ENCODE measurements at regions of chr2 and their contacts with region 1.

Region 1: DNA sequence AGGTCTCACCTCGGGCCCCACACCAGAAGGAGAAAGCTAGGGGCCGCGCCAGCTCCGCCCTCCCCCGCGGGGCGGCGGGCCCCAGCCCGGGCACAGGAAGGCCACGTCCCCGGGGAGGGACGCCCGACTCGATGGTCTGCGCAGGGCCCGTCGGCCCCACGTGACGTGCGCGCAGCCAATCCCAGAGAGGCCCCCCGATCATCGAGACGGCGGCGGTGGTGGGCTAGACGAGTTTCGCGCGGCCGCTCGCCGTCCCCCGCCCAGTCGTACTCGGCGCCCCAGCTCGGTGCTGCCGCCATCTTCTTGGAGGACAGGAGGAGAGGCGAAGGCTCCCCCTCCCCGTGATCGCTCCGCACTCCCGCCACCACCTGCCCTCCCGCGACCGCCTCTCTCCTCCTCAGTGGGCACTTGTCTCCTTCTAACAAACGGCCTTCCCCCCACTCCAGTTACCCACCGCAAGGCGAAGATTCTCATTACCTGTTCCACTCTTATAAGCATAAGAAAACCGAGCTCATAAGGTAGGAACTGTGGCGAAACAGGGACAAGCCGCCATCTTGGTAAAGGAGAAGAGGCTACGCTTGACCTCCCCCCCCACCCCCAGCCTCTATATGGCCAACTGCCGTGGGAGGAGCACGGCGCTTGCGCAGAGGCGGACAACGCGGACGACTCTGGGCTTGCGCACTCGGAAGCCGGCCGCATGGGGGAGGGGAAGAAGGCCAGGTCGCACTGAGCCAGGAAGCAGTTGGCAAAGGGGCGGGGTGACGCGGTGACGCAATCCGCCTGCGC is at the start of gene HDLBP:
- DNase-seq: peak; percentile 100
- ATAC-seq: peak; percentile 83
- H3K4me3 Mint-ChIP-seq: peak within 1 kb of the TSS; percentile 99
- H3K27ac Mint-ChIP-seq: peak within 1 kb of the TSS; percentile 100
- H3K4me1 Mint-ChIP-seq: peaks cover 66% of the 10 kb centered on the region
- H3K27me3 Mint-ChIP-seq: no peaks in the 10 kb centered on the region
- CTCF ChIP-seq: no peak
- total RNA-seq, gene HDLBP: 259 to 266 TPM

Region 2: DNA sequence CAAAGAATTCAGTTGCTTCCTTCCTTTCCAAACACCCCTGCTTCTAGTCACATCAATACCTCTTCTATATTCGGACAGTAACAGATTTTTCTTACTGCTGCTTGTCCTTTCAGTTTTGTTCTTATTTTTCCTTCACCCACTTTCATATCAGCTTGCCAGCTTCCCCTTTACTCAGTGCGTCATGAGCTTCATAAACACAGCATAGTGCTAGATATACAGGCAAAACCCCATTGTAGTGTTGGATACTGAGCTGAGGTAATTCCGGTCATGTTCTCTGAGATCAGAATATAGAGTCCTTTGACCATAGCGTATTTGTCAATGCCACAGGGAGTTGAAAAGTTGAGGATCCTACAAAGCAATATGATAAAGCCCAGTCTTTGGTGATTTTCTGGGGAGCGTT is 43.2 kb after region 1 on chr2:
- CTCF ChIA-PET with region 1: no interaction called
- POLR2A ChIA-PET with region 1: interaction called, 11 read pairs
- intact Hi-C with region 1: no loop called
- DNase-seq: no peak
- ATAC-seq: no peak
- H3K4me3 Mint-ChIP-seq: peak overlapping the region; percentile 27
- H3K27ac Mint-ChIP-seq: no peak overlapping the region
- H3K4me1 Mint-ChIP-seq: peaks cover 22% of the 10 kb centered on the region
- H3K27me3 Mint-ChIP-seq: no peaks in the 10 kb centered on the region
- CTCF ChIP-seq: no peak

Region 3: GRCh38 chr2:241481687-241482086 is 166.4 kb after region 1 on chr2:
- CTCF ChIA-PET with region 1: no interaction called
- POLR2A ChIA-PET with region 1: no interaction called
- intact Hi-C with region 1: no loop called
- DNase-seq: no peak
- ATAC-seq: no peak
- H3K4me3 Mint-ChIP-seq: no peak overlapping the region
- H3K27ac Mint-ChIP-seq: no peak overlapping the region
- H3K4me1 Mint-ChIP-seq: no peaks in the 10 kb centered on the region
- H3K27me3 Mint-ChIP-seq: no peaks in the 10 kb centered on the region
- CTCF ChIP-seq: no peak

Measured in activated CD8-positive, alpha-beta T cell treated with anti-CD3 and anti-CD28 coated beads for 36 hours (primary cell).